GM12878 (cell line): ENCODE measurements at regions of chrX and their contacts with region 1.

Region 1: GRCh38 chrX:118807151-118808017 is 16.2 kb upstream of the ZCCHC12 start:
- DNase-seq: peak; percentile 15
- ATAC-seq: peak; percentile 88
- H3K4me3 ChIP-seq: no peak overlapping the region
- H3K27ac ChIP-seq: no peak overlapping the region
- H3K4me1 ChIP-seq: no peaks in the 10 kb centered on the region
- H3K27me3 ChIP-seq: no peaks in the 10 kb centered on the region; a peak in 1 of 4 replicates
- CTCF ChIP-seq: peak; percentile 56 to 78 (median 65)
- EP300 ChIP-seq: no peak
- POLR2A ChIP-seq: no peak
- RAD21 ChIP-seq: peak; percentile 86

Region 2: DNA sequence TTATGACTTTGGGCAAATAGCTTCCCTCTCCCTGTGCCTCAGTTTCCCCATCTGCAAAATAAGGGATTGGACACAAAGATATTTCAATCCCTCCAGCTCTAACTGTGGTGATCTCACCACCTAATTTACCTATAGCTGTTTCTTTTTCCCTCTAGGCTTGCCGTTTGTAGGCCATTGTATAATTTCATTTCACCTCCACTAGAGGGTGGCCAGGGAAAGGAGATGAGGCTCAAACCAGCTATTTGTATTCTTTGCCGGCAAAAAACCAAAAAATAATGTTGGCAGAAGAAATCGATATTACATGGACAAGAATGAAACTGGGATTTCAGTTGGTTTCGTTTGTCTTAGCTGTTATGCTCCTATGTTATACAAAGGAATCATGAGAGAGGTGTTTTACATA is 347.9 kb before region 1 on chrX:
- CTCF ChIA-PET with region 1: interaction called, 3 read pairs
- POLR2A ChIA-PET with region 1: no interaction called
- RAD21 ChIA-PET with region 1: interaction called, 7 read pairs
- SMC1A ChIA-PET with region 1: interaction called, 4 read pairs
- in situ Hi-C with region 1: no loop called
- intact Hi-C with region 1: loop called (anchors 5 kb)
- DNase-seq: peak; percentile 2
- ATAC-seq: peak; percentile 81
- H3K4me3 ChIP-seq: no peak overlapping the region
- H3K27ac ChIP-seq: no peak overlapping the region
- H3K4me1 ChIP-seq: no peaks in the 10 kb centered on the region
- H3K27me3 ChIP-seq: no peaks in the 10 kb centered on the region
- CTCF ChIP-seq: peak; percentile 43 to 60 (median 44); a peak in 4 of 6 replicates
- EP300 ChIP-seq: no peak
- POLR2A ChIP-seq: no peak
- RAD21 ChIP-seq: peak; percentile 80

Region 3: DNA sequence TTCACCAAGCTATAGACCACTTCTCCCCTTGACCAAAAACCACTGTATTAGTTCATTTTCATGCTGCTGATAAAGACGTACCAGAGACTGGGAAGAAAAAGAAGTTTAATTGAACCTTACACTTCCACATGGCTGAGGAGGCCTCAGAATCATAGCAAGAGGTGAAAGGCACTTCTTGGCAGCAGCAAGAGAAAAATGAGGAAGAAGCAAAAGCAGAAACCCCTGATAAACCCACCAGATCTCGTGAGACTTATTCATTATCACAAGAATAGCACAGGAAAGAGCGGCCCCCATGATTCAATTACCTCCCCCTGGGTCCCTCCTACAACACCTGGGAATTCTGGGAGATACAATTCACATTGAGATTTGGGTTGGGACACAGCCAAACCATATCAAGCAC is 214.0 kb before region 1 on chrX:
- CTCF ChIA-PET with region 1: no interaction called
- POLR2A ChIA-PET with region 1: no interaction called
- RAD21 ChIA-PET with region 1: no interaction called
- SMC1A ChIA-PET with region 1: no interaction called
- in situ Hi-C with region 1: no loop called
- intact Hi-C with region 1: no loop called
- DNase-seq: no peak
- ATAC-seq: no peak
- H3K4me3 ChIP-seq: no peak overlapping the region
- H3K27ac ChIP-seq: no peak overlapping the region
- H3K4me1 ChIP-seq: no peaks in the 10 kb centered on the region
- H3K27me3 ChIP-seq: no peaks in the 10 kb centered on the region
- CTCF ChIP-seq: no peak
- EP300 ChIP-seq: no peak
- POLR2A ChIP-seq: no peak
- RAD21 ChIP-seq: no peak

Region 4: DNA sequence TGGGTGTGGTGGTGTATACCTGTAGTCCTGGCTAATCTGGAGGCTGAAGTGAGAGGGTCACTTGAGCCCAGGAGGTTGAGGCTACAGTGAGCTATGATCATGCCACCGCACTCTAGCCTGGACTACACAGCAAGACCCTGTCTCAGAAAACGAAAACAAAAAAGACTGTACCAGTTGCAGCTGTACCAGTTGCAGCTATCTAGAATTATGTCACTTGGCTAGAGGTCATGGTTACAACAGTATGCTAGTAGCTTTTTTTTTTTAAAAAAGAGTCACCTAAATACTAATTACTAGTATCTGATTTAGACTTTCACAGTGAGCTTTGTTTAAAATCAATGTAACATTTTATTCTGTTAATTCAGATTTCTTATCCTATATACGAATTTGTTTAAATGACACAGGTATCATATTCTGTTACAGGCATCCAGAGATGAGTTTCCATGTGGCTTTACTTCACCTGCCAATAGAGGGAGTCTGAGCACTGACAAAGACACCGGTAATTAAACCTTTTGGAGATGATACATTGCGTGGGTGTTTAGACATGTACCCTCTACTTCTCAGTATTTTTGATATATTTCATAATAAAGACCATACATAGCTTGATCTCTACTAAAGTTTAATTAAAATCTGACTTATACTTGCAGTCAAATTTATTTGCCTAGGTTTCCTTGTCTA is 180.2 kb before region 1 on chrX:
- CTCF ChIA-PET with region 1: interaction called, 26 read pairs
- POLR2A ChIA-PET with region 1: no interaction called
- RAD21 ChIA-PET with region 1: interaction called, 17 read pairs
- SMC1A ChIA-PET with region 1: interaction called, 20 read pairs
- in situ Hi-C with region 1: loop called (anchors 10 kb)
- intact Hi-C with region 1: loop called (anchors 1 kb)
- DNase-seq: no peak
- ATAC-seq: peak; percentile 57; the same call in 2 of the 3 replicates
- H3K4me3 ChIP-seq: no peak overlapping the region
- H3K27ac ChIP-seq: no peak overlapping the region
- H3K4me1 ChIP-seq: no peaks in the 10 kb centered on the region
- H3K27me3 ChIP-seq: no peaks in the 10 kb centered on the region
- CTCF ChIP-seq: peak; percentile 41 to 55 (median 44); a peak in 5 of 6 replicates
- EP300 ChIP-seq: no peak
- POLR2A ChIP-seq: no peak
- RAD21 ChIP-seq: peak; percentile 65

Region 5: GRCh38 chrX:118644378-118644777 is 163.0 kb before region 1 on chrX:
- CTCF ChIA-PET with region 1: interaction called, 22 read pairs
- POLR2A ChIA-PET with region 1: no interaction called
- RAD21 ChIA-PET with region 1: interaction called, 18 read pairs
- SMC1A ChIA-PET with region 1: interaction called, 29 read pairs
- in situ Hi-C with region 1: loop called (anchors 10 kb)
- intact Hi-C with region 1: loop called (anchors 1 kb)
- DNase-seq: no peak
- ATAC-seq: peak; percentile 76
- H3K4me3 ChIP-seq: no peak overlapping the region
- H3K27ac ChIP-seq: no peak overlapping the region
- H3K4me1 ChIP-seq: no peaks in the 10 kb centered on the region
- H3K27me3 ChIP-seq: no peaks in the 10 kb centered on the region
- CTCF ChIP-seq: peak in 2 of 3 experiments; percentile 31 to 45; a peak in 3 of 6 replicates
- EP300 ChIP-seq: no peak
- POLR2A ChIP-seq: no peak
- RAD21 ChIP-seq: peak; percentile 43; the same call in 1 of the 2 replicates

Region 6: GRCh38 chrX:118751950-118752783 is 55.2 kb before region 1 on chrX:
- CTCF ChIA-PET with region 1: interaction called, 14 read pairs
- POLR2A ChIA-PET with region 1: interaction called, 3 read pairs
- RAD21 ChIA-PET with region 1: interaction called, 3 read pairs
- SMC1A ChIA-PET with region 1: interaction called, 9 read pairs
- in situ Hi-C with region 1: no loop called
- intact Hi-C with region 1: no loop called
- DNase-seq: peak; percentile 36
- ATAC-seq: peak; percentile 94
- H3K4me3 ChIP-seq: no peak overlapping the region; the same call in 1 of the 2 replicates
- H3K27ac ChIP-seq: no peak overlapping the region
- H3K4me1 ChIP-seq: no peaks in the 10 kb centered on the region
- H3K27me3 ChIP-seq: no peaks in the 10 kb centered on the region
- CTCF ChIP-seq: no peak
- EP300 ChIP-seq: 0 out of 4 replicates have a peak, but pooled peaks of 1 of the 2 experiments have one; percentile 15
- POLR2A ChIP-seq: no peak
- RAD21 ChIP-seq: no peak